K562 (cell line): ENCODE measurements at regions of chr22 and their contacts with region 1.

Region 1: DNA sequence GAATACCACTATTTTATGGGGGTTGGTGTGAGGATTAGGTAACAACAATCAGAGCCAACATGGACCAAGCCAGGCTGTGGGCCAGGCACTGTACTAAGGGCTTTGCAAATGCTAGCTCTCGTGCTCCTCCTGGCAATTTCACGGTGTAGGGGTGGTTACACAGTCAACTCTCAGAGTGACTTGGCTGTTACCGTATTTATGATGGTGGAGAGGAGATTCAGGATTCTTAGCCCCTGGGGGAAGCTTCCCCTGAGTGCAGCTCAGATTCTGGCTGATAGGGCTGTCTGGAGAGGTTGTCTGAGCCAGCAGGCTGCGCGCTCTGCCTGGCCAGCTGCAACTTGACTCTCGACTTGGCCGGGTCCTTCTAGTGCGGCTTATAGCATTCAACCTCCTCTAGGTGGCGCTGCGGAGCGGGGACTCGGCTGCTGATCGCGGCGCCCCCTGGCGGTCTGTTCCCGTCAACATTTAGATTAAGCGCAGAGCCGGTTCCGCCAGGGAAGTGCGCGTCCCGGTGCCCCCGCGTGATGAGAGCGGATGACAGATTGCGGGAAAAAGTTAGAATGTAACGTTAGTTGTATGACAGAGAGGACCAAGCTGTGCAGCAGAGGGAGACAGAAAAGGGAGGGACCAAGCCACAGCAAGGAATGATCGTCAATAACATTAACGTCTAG is 4.5 kb upstream of the NCF4 start:
- DNase-seq: peak; percentile 77 to 88 (median 77)
- ATAC-seq: peak; percentile 96
- H3K4me3 ChIP-seq: no peak overlapping the region
- H3K27ac ChIP-seq: no peak overlapping the region
- H3K4me1 ChIP-seq: peaks cover 0 to 12% of the 10 kb centered on the region in 2 experiments; a peak in 3 of 5 replicates
- H3K27me3 ChIP-seq: peaks cover 0 to 6% of the 10 kb centered on the region in 2 experiments; a peak in 1 of 5 replicates
- CTCF ChIP-seq: peak; percentile 99 to 100 (median 100)
- EP300 ChIP-seq: 0 out of 2 replicates have a peak, but pooled peaks have one; percentile 42
- POLR2A ChIP-seq: no peak
- RAD21 ChIP-seq: peak; percentile 79 to 84

Region 2: DNA sequence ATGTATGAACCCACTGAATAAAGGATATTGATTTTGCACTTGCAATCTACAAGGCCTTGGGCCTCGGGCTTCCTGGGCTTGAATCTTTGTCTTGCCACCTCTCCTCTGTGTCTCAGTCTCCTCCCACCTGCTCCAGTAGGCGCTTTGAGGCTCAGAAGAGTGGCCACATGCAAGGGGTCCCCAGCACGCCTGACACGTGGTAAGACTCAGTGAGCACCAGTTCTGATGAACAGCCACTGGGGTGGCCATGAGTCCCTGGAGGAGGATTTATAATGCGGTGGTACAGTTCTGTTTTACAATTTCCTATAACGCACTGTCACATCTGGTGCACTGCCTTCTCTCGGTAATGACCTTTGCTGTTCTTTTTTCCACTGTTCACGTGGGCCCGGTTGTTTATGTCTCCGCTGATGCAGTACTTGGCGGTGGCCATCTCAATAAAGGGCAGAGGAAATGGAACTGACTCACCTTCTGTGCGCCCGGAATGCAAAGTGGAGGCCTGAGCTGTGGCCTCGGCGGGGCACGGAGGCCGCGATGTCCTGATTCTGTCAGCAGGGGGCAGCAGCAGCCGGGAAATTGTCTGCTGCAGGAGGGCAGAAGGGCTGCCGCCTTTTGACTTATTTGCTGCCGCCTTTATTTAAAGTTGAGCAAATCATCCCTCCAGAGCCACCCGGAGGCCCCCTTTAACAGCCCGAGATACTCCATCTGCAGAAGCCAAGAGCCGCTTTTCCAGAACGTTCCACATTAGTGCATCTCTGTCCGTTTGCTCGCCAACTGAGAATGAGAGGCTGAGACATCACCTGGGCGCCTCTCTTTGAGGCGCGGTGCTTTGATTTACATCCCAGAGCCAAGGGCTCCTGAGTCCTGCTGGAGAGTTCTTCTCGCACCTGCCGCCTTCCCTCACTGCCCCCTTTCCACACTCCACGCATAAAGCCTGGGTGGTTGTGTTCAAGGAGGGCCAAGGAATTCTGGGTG is 74.3 kb before region 1 on chr22:
- CTCF ChIA-PET with region 1: interaction called, 21 read pairs
- POLR2A ChIA-PET with region 1: no interaction called
- in situ Hi-C with region 1: no loop called
- intact Hi-C with region 1: loop called (anchors 2 kb)
- DNase-seq: peak; percentile 64 to 77 (median 75)
- ATAC-seq: peak; percentile 90
- H3K4me3 ChIP-seq: no peak overlapping the region
- H3K27ac ChIP-seq: no peak overlapping the region
- H3K4me1 ChIP-seq: no peaks in the 10 kb centered on the region; a peak in 1 of 5 replicates
- H3K27me3 ChIP-seq: peaks cover under 1 to 41% of the 10 kb centered on the region in 2 experiments; a peak in 4 of 5 replicates
- CTCF ChIP-seq: peak; percentile 79 to 85 (median 81)
- EP300 ChIP-seq: no peak
- POLR2A ChIP-seq: no peak
- RAD21 ChIP-seq: peak; percentile 73 to 80

Region 3: DNA sequence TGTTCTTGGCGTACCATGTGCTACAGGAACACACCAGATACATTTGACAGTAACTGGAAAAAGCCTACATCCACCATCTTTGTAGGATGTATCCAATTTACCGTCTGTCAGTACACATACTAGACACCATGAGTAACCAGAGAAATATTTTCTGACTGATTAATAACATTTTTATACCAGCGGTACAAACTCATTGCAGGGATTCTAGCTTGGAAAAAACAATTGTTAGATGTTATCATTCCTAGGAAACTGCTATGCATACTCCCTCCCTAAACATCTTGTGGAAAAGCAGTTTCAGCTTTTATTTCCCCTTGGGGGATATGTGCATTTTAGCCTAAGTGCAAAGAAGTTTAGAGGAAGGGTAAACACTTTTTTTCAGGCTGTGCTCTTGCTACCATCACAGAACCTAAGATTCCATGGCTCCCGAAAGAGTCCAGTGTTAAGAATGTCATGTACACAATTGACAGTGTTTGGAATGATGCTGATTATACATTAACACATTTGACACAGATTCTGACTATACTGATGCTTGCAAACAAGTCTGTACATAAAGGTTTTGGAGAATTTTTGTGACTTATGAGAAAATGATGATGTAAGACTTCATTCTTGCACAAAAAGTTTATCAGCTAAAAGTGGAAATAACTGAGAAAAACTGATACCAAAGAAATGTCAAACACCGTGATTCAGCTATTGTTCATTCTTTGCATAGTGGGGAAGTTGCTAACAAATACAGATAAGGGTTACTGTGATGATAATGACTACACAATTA is 28.3 kb after region 1 on chr22:
- CTCF ChIA-PET with region 1: no interaction called
- POLR2A ChIA-PET with region 1: no interaction called
- in situ Hi-C with region 1: no loop called
- intact Hi-C with region 1: no loop called
- DNase-seq: no peak
- ATAC-seq: no peak
- H3K4me3 ChIP-seq: no peak overlapping the region
- H3K27ac ChIP-seq: no peak overlapping the region
- H3K4me1 ChIP-seq: peaks cover 0 to 4% of the 10 kb centered on the region in 2 experiments; a peak in 2 of 5 replicates
- H3K27me3 ChIP-seq: no peaks in the 10 kb centered on the region; a peak in 1 of 5 replicates
- CTCF ChIP-seq: no peak
- EP300 ChIP-seq: no peak
- POLR2A ChIP-seq: no peak
- RAD21 ChIP-seq: no peak

Region 4: DNA sequence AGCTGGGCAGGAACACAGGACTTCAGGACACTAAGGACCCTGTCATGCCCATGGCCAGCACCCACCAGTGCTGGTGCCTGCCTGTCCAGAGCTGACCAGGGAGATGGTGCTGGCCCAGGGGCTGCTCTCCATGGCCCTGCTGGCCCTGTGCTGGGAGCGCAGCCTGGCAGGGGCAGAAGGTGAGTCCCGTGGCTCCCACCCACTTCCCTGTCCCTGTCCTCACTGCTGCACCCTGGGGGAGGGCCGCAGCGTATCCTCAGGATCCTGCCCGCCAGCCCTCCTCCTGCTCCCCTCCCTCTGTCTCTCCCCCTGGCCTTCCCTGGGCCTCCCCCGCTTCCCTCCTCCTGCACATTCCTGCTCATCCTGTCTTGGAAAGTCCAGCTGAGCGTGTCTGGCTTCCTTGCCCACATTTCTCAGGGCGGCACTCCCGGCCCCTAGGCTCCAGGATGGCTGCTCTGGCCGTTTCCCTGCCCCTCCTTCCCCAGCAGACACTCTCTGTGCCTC is 65.9 kb after region 1 on chr22:
- CTCF ChIA-PET with region 1: no interaction called
- POLR2A ChIA-PET with region 1: no interaction called
- in situ Hi-C with region 1: no loop called
- intact Hi-C with region 1: no loop called
- DNase-seq: no peak
- ATAC-seq: no peak
- H3K4me3 ChIP-seq: no peak overlapping the region
- H3K27ac ChIP-seq: no peak overlapping the region
- H3K4me1 ChIP-seq: peaks cover 0 to 14% of the 10 kb centered on the region in 2 experiments; a peak in 2 of 5 replicates
- H3K27me3 ChIP-seq: peaks cover 0 to 40% of the 10 kb centered on the region in 2 experiments; a peak in 3 of 5 replicates
- CTCF ChIP-seq: no peak
- EP300 ChIP-seq: no peak
- POLR2A ChIP-seq: no peak
- RAD21 ChIP-seq: no peak

Region 5: GRCh38 chr22:37401401-37402183 is 545.3 kb after region 1 on chr22:
- CTCF ChIA-PET with region 1: no interaction called
- POLR2A ChIA-PET with region 1: no interaction called
- in situ Hi-C with region 1: no loop called
- intact Hi-C with region 1: no loop called
- DNase-seq: no peak
- ATAC-seq: no peak
- H3K4me3 ChIP-seq: no peak overlapping the region
- H3K27ac ChIP-seq: no peak overlapping the region
- H3K4me1 ChIP-seq: no peaks in the 10 kb centered on the region
- H3K27me3 ChIP-seq: peaks cover 2 to 35% of the 10 kb centered on the region in 2 experiments; a peak in 3 of 5 replicates
- CTCF ChIP-seq: no peak
- EP300 ChIP-seq: no peak
- POLR2A ChIP-seq: no peak
- RAD21 ChIP-seq: no peak